ENCODE measurements at regions of chr13 and their contacts with region 1.

Region 1: DNA sequence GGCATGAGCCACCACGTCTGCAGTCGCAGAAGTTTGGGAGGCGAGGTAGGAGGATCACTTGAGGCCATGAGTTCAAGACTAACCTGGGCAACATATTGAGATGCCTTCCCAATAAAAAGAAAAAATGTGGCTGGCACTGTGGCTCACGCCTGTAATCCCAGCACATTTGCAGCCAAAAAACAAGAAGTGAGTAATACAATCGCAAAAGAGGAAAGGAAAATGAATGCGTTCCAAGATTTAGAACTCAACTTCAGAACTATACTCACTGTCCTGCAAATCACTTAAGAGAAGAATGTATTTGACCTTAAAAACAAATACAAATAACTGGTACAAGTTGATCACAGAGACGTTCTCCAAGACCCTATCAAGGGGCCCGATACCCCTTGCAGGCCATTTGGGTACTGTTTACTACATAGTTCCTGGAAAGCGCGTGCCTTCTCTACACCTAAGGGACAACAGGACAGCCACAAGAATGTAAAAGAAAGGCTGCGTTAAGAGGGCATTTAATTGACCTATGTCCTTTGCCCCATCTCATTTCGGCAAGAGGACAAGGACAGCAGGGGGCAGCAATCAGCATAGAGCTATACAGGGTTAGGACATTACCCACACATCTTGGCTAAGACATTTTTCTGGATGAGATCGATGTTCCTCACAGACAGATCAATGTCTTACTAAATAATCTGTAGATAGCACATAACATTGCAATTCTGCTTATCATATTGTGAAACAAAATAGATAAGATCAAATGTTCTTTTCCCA is 41.3 kb downstream of the FLT3 start:
- DNase-seq: peak; percentile 71 to 78
- H3K4me3 ChIP-seq: no peak overlapping the region
- H3K4me3 Mint-ChIP-seq: no peak overlapping the region
- H3K27ac Mint-ChIP-seq: no peak overlapping the region
- H3K4me1 ChIP-seq: no peaks in the 10 kb centered on the region
- H3K4me1 Mint-ChIP-seq: no peaks in the 10 kb centered on the region
- H3K27me3 ChIP-seq: no peaks in the 10 kb centered on the region
- H3K27me3 Mint-ChIP-seq: no peaks in the 10 kb centered on the region
- CTCF ChIP-seq: peak; percentile 62 to 77

Region 2: DNA sequence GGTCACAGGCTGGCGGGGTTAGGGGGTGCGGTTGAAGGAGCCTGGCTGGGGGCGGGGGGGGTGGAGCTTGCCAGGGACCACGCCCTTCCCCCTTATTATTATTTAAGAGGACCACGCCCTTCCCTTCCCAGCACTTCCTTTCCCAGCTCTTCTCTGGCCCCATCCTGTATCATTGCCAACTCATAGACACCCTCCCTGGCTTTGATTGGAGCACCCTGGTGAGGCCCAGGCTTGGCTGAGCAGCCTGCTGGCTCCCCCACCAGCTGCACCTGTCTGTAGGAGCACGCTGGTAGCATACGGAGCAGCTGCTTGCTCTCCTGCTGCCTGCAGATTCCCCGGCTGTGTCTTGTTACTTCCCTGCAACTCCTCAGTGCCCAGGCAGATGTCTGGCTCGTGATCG is 201.8 kb before region 1 on chr13:
- CTCF ChIA-PET with region 1: no interaction called
- POLR2A ChIA-PET with region 1: no interaction called
- intact Hi-C with region 1: no loop called
- DNase-seq: no peak
- H3K4me3 ChIP-seq: no peak overlapping the region
- H3K4me3 Mint-ChIP-seq: no peak overlapping the region
- H3K27ac Mint-ChIP-seq: no peak overlapping the region
- H3K4me1 ChIP-seq: peaks cover 34% of the 10 kb centered on the region
- H3K4me1 Mint-ChIP-seq: peaks cover 21% of the 10 kb centered on the region
- H3K27me3 ChIP-seq: no peaks in the 10 kb centered on the region
- H3K27me3 Mint-ChIP-seq: no peaks in the 10 kb centered on the region
- CTCF ChIP-seq: no peak

Region 3: GRCh38 chr13:27988520-27988919 is 70.5 kb before region 1 on chr13 and contains the start of gene URAD:
- CTCF ChIA-PET with region 1: no interaction called
- POLR2A ChIA-PET with region 1: no interaction called
- intact Hi-C with region 1: no loop called
- DNase-seq: peak; percentile 69 to 75
- H3K4me3 ChIP-seq: no peak within 1 kb of the TSS
- H3K4me3 Mint-ChIP-seq: peak within 1 kb of the TSS; percentile 43
- H3K27ac Mint-ChIP-seq: peak within 1 kb of the TSS; percentile 48
- H3K4me1 ChIP-seq: peaks cover 25% of the 10 kb centered on the region
- H3K4me1 Mint-ChIP-seq: peaks cover 17% of the 10 kb centered on the region
- H3K27me3 ChIP-seq: no peaks in the 10 kb centered on the region
- H3K27me3 Mint-ChIP-seq: no peaks in the 10 kb centered on the region
- CTCF ChIP-seq: no peak
- total RNA-seq, gene URAD: 5.2 and 8.1 TPM in 2 replicates

Region 4: DNA sequence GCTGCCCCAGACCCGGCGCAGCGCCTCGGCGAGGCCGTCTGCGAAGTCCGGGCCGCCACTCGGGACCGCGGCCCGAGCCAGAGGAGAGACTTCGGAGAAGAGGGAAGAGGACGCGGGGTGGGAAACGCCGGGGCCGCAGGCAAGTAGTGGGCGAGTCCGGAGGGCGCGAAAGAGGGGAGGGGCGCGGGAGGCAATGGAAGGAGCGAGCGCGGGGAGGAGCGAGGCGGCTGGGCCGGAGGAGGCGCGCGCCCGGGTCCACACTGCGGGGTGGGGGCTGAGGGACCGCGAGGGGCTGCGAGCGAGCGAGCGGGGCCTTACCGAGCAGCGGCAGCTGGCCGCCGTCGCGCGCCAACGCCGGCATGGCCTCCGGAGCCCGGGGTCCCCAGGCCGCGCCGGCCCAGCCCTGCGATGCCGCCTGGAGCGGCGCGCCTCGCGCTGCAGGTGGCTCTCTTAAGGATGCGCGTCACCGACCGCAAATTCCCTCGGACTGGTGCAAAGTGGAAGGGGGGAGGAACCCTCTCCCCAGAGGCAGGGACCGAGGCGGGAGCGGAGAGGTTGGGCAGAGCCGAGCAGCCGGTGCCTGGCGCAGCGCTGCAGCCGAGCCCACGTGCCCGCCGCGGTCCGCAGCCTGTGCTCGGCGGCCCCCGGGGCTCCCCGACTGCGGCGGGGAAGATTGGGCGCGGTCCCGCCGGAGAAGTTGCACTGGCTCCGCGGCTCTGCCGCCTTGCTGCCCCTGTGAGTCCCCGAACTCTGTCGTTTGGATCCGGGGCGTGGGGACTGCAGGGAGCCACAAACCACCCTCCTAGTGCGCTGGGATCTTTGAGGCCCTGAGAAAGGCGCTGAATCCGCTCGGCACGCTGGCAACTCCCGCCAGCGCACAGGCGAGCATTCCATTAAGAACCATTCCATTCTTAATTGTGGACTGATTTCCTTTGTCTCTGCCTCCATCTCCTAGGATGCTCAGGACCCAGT is 41.4 kb after region 1 on chr13 and contains the start of gene FLT3:
- CTCF ChIA-PET with region 1: no interaction called
- POLR2A ChIA-PET with region 1: no interaction called
- intact Hi-C with region 1: no loop called
- DNase-seq: peak; percentile 51 to 57
- H3K4me3 ChIP-seq: peak within 1 kb of the TSS; percentile 35
- H3K4me3 Mint-ChIP-seq: peak within 1 kb of the TSS; percentile 74
- H3K27ac Mint-ChIP-seq: no peak within 1 kb of the TSS
- H3K4me1 ChIP-seq: no peaks in the 10 kb centered on the region
- H3K4me1 Mint-ChIP-seq: no peaks in the 10 kb centered on the region
- H3K27me3 ChIP-seq: no peaks in the 10 kb centered on the region
- H3K27me3 Mint-ChIP-seq: peaks cover 31% of the 10 kb centered on the region
- CTCF ChIP-seq: no peak
- total RNA-seq, gene FLT3: 0.09 TPM in 1 of 2 replicates, not detected in the other

Region 5: DNA sequence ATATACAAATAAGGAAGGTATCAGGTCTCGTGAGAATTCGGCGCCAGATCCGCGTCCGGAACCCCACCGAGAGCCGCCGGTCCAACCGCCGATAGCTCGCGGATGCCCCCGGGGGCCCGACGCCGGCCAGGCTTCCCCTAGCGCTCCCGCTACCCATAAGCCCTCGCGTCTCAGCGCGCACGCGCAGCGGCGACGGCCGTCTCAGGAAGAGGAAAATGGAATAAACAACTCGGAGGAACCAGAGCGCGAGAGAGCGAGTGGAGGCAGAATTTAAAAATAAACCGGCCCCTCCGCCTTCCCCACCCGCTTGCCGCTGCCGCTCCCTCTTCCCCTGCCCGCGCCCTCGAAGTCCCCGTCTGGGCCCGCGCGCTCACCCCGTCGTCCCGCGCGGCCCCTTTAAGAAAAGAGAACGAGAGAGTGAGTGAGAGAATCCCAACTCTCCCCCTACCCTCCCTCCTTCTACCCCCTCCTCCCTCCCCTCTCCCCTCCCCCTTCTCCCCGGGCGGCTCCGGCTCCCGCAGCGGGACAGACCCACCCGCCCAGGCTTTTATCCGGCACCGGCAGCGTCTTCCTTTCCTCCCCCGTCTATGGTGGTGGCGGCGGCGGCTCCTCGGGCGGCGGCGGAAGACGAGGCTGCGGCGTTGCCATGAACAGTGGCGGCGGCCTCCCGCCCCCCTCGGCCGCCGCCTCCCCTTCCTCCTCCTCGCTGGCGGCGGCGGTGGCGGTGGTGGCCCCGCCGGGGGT is 79.1 kb after region 1 on chr13 and contains the start of gene PAN3:
- CTCF ChIA-PET with region 1: no interaction called
- POLR2A ChIA-PET with region 1: interaction called, 3 read pairs
- intact Hi-C with region 1: loop called (anchors 2 kb)
- DNase-seq: peak; percentile 95
- H3K4me3 ChIP-seq: peak within 1 kb of the TSS; percentile 93
- H3K4me3 Mint-ChIP-seq: peak within 1 kb of the TSS; percentile 85
- H3K27ac Mint-ChIP-seq: peak within 1 kb of the TSS; percentile 85
- H3K4me1 ChIP-seq: 0 out of 2 replicates have a peak, but pooled peaks cover 6% of the 10 kb centered on the region
- H3K4me1 Mint-ChIP-seq: peaks cover 23% of the 10 kb centered on the region
- H3K27me3 ChIP-seq: no peaks in the 10 kb centered on the region
- H3K27me3 Mint-ChIP-seq: no peaks in the 10 kb centered on the region
- CTCF ChIP-seq: peak in 1 of 2 experiments; percentile 37
- total RNA-seq, gene PAN3: 37.5 and 38.4 TPM in 2 replicates

Region 6: GRCh38 chr13:28220166-28220565 is 161.1 kb after region 1 on chr13:
- CTCF ChIA-PET with region 1: no interaction called
- POLR2A ChIA-PET with region 1: no interaction called
- intact Hi-C with region 1: no loop called
- DNase-seq: no peak
- H3K4me3 ChIP-seq: no peak overlapping the region
- H3K4me3 Mint-ChIP-seq: no peak overlapping the region
- H3K27ac Mint-ChIP-seq: no peak overlapping the region
- H3K4me1 ChIP-seq: no peaks in the 10 kb centered on the region
- H3K4me1 Mint-ChIP-seq: no peaks in the 10 kb centered on the region
- H3K27me3 ChIP-seq: no peaks in the 10 kb centered on the region
- H3K27me3 Mint-ChIP-seq: no peaks in the 10 kb centered on the region
- CTCF ChIP-seq: no peak

Region 7: DNA sequence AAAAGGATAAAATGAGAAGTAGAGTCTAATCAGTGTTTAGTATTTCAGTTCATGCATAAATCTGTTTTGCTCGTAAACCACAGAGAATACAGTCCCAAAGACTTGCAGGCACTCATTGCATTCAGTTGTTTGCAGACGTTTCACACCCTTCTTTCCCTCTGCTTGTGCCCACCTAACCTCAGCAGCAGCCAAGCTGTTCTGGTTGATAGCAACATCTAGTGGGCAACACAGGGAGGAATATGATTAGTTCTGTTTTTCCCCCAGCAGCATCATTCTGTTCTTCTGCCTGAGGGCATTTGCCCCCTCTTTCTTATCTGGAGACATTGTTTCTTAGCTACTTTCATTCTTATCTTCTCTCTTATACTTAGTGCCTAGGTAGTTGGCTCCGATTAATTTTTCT is 214.9 kb after region 1 on chr13:
- CTCF ChIA-PET with region 1: interaction called, 3 read pairs
- POLR2A ChIA-PET with region 1: no interaction called
- intact Hi-C with region 1: loop called (anchors 5 kb)
- DNase-seq: peak in 1 of 2 experiments; percentile 5
- H3K4me3 ChIP-seq: no peak overlapping the region
- H3K4me3 Mint-ChIP-seq: no peak overlapping the region
- H3K27ac Mint-ChIP-seq: no peak overlapping the region
- H3K4me1 ChIP-seq: no peaks in the 10 kb centered on the region
- H3K4me1 Mint-ChIP-seq: no peaks in the 10 kb centered on the region
- H3K27me3 ChIP-seq: no peaks in the 10 kb centered on the region
- H3K27me3 Mint-ChIP-seq: no peaks in the 10 kb centered on the region
- CTCF ChIP-seq: no peak

Measured in Caco-2 (cell line).